ENCODE measurements at regions of chr14 and their contacts with region 1.

Region 1: GRCh38 chr14:95092723-95093122 is 64.6 kb downstream of the DICER1 start:
- DNase-seq: no peak
- ATAC-seq: no peak
- H3K4me3 ChIP-seq: no peak overlapping the region
- H3K27ac ChIP-seq: no peak overlapping the region
- H3K4me1 ChIP-seq: no peaks in the 10 kb centered on the region
- H3K27me3 ChIP-seq: no peaks in the 10 kb centered on the region

Region 2: GRCh38 chr14:94689218-94689984 is 403.3 kb before region 1 on chr14:
- intact Hi-C with region 1: loop called in 2 of 4 experiments (anchors 5 kb)
- DNase-seq: peak; percentile 61 to 88 (median 86)
- ATAC-seq: peak; percentile 94
- H3K4me3 ChIP-seq: no peak overlapping the region
- H3K27ac ChIP-seq: no peak overlapping the region
- H3K4me1 ChIP-seq: no peaks in the 10 kb centered on the region
- H3K27me3 ChIP-seq: no peaks in the 10 kb centered on the region

Region 3: DNA sequence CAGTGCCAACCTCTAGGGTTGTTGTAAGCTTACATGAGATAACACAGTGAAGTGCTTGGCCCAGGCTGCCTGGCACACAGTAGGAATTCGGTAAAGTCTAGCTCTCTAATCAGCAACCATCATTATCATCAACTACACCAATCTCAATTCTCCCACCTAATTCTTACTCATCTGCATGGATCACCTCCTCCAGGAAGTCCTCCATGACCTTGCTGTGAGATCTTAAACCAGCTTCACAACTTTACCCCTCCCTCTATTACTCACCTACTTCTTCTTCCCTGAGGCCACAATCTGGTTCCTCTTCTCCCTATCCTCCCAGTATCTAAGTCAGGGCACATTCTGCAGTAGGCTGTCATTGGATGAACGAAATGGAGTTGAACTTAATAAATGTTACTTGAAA is 390.1 kb before region 1 on chr14:
- intact Hi-C with region 1: loop called in 1 of 4 experiments (anchors 5 kb)
- DNase-seq: no peak
- ATAC-seq: no peak
- H3K4me3 ChIP-seq: no peak overlapping the region
- H3K27ac ChIP-seq: no peak overlapping the region
- H3K4me1 ChIP-seq: no peaks in the 10 kb centered on the region
- H3K27me3 ChIP-seq: no peaks in the 10 kb centered on the region

Region 4: GRCh38 chr14:95174184-95174792 is 81.6 kb after region 1 on chr14:
- intact Hi-C with region 1: no loop called
- DNase-seq: no peak
- ATAC-seq: peak in 1 of 2 donors; percentile 40
- H3K4me3 ChIP-seq: no peak overlapping the region
- H3K27ac ChIP-seq: no peak overlapping the region
- H3K4me1 ChIP-seq: peaks cover 3% of the 10 kb centered on the region
- H3K27me3 ChIP-seq: no peaks in the 10 kb centered on the region

Region 5: GRCh38 chr14:95211721-95212504 is 119.2 kb after region 1 on chr14:
- intact Hi-C with region 1: no loop called
- DNase-seq: no peak
- ATAC-seq: no peak
- H3K4me3 ChIP-seq: no peak overlapping the region
- H3K27ac ChIP-seq: no peak overlapping the region
- H3K4me1 ChIP-seq: no peaks in the 10 kb centered on the region
- H3K27me3 ChIP-seq: no peaks in the 10 kb centered on the region

Measured in right cardiac atrium (tissue), 5 donors.